ENCODE measurements at regions of chr18 and their contacts with region 1.

Region 1: GRCh38 chr18:79405781-79406575 is 10.2 kb downstream of the NFATC1 start:
- DNase-seq: peak; percentile 90
- CTCF ChIP-seq: no peak

Region 2: DNA sequence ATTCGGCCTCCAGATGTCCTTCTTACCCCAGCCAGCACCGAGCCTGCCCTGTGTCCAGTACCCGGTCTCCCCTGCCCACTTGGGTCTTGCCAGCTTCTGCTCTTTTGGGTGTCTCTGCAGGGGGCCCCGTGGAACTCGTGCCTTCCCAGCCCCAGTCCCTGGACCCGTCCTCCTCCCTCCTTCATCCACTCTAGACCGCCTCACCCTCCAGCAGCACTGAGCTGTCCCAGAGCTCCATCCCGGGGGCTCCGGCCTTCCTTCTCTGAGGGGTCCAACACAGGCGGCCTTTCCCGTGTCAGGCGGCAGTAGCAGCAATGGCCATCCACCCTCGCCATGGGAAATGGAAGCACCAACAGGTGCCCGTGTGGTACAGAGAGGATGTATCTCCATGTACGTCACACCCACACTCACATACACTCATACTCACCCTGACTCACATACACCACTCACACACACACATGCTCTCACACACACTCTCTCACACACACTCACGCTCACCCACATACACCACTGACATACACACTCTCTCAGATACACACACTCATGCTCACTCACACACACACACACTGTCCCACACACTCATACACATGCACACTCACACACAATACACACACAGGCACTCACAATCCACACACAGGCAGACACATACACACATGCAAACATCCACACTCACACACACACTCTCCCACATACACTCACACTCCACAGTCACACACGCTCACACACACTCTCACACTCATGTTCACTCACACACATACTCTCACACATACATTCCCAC is 1253.8 kb before region 1 on chr18:
- CTCF ChIA-PET with region 1: no interaction called
- POLR2A ChIA-PET with region 1: no interaction called
- DNase-seq: no peak
- CTCF ChIP-seq: no peak

Region 3: GRCh38 chr18:79393635-79394533 is 12.1 kb before region 1 on chr18:
- CTCF ChIA-PET with region 1: interaction called, 10 read pairs
- POLR2A ChIA-PET with region 1: no interaction called
- DNase-seq: peak; percentile 63
- CTCF ChIP-seq: no peak